ENCODE measurements at regions of chr20 and their contacts with region 1.

Region 1: GRCh38 chr20:42441864-42442331 is 747.8 kb downstream of the PTPRT start:
- DNase-seq: no peak
- ATAC-seq: peak in 1 of 4 donors; percentile 54
- H3K4me3 ChIP-seq: no peak overlapping the region
- H3K27ac ChIP-seq: no peak overlapping the region
- H3K4me1 ChIP-seq: no peaks in the 10 kb centered on the region
- H3K27me3 ChIP-seq: no peaks in the 10 kb centered on the region
- CTCF ChIP-seq: no peak

Region 2: GRCh38 chr20:42218621-42219374 is 223.1 kb before region 1 on chr20:
- intact Hi-C with region 1: loop called in 1 of 3 experiments (anchors 10 kb)
- DNase-seq: no peak
- ATAC-seq: no peak
- H3K4me3 ChIP-seq: no peak overlapping the region
- H3K27ac ChIP-seq: no peak overlapping the region
- H3K4me1 ChIP-seq: no peaks in the 10 kb centered on the region
- H3K27me3 ChIP-seq: no peaks in the 10 kb centered on the region
- CTCF ChIP-seq: no peak

Region 3: GRCh38 chr20:42380287-42380686 is 61.6 kb before region 1 on chr20:
- intact Hi-C with region 1: no loop called
- DNase-seq: no peak
- ATAC-seq: no peak
- H3K4me3 ChIP-seq: no peak overlapping the region
- H3K27ac ChIP-seq: no peak overlapping the region
- H3K4me1 ChIP-seq: no peaks in the 10 kb centered on the region
- H3K27me3 ChIP-seq: no peaks in the 10 kb centered on the region
- CTCF ChIP-seq: no peak